Aorta (tissue), 5 donors: ENCODE measurements at regions of chr16 and their contacts with region 1.

Region 1: DNA sequence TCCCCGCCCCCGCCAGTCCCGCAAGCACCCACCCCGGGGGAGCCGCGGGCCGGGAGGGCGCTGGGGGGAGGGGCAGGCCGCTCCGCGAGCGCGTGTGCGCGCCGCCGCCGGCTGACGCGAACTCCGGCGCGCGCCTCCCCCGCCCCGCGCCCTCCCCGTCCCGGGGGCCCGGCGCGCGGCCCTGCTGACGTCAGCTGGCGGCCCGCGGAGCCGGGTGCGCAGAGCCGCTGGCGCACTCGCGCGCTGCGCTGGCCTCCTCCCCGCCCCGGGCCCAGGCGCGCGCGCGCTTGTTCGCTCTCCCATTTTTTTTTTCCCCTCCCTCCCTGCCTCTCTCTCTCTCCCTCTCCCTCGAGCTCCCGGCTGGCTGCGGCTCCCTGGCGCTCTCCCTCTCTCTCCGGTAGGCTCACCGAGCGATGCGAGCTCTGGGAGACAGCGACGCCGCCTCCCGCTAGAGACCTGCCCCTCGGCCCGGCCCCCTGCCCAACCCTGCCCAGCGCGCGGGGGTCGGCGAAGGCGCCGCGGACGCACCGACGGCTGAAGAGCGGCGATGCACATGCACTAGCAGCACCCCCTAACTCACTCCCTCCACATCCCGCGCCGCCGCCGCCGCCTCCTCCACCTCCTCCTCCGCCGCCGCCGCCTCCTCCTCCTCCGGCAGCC is at the start of gene GNAO1:
- DNase-seq: peak; percentile 75 to 91
- ATAC-seq: peak; percentile 87
- H3K4me3 ChIP-seq: peak within 1 kb of the TSS; percentile 62 to 92
- H3K27ac ChIP-seq: peak within 1 kb of the TSS; percentile 69 to 96
- H3K4me1 ChIP-seq: no peaks in the 10 kb centered on the region
- H3K27me3 ChIP-seq: no peaks in the 10 kb centered on the region
- total RNA-seq, gene GNAO1: 6.9 to 16.2 TPM

Region 2: DNA sequence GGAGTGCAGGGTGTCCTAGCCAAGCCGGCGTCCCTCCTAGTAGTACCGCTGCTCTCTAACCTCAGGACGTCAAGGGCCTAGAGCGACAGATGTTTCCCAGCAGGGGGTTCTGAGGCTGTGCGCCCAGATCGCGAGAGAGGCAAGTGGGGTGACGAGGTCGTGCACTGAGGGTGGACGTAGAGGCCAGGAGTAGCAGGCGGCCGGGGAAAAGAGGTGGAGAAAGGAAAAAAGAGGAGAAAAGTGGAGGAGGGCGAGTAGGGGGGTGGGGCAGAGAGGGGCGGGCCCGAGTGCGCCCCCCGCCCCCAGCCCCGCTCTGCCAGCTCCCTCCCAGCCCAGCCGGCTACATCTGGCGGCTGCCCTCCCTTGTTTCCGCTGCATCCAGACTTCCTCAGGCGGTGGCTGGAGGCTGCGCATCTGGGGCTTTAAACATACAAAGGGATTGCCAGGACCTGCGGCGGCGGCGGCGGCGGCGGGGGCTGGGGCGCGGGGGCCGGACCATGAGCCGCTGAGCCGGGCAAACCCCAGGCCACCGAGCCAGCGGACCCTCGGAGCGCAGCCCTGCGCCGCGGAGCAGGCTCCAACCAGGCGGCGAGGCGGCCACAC is 712.4 kb before region 1 on chr16 and contains the start of gene MMP2:
- intact Hi-C with region 1: loop called in 1 of 2 experiments (anchors 10 kb)
- DNase-seq: peak; percentile 87 to 88
- ATAC-seq: peak; percentile 53
- H3K4me3 ChIP-seq: peak within 1 kb of the TSS; percentile 37 to 69
- H3K27ac ChIP-seq: peak within 1 kb of the TSS in 1 of 2 donors; percentile 70
- H3K4me1 ChIP-seq: no peaks in the 10 kb centered on the region
- H3K27me3 ChIP-seq: no peaks in the 10 kb centered on the region
- total RNA-seq, gene MMP2: 261 to 731 TPM

Region 3: GRCh38 chr16:55577887-55578286 is 613.4 kb before region 1 on chr16:
- intact Hi-C with region 1: no loop called
- DNase-seq: no peak
- ATAC-seq: no peak
- H3K4me3 ChIP-seq: no peak overlapping the region
- H3K27ac ChIP-seq: no peak overlapping the region
- H3K4me1 ChIP-seq: no peaks in the 10 kb centered on the region
- H3K27me3 ChIP-seq: no peaks in the 10 kb centered on the region

Region 4: GRCh38 chr16:55944377-55944802 is 246.9 kb before region 1 on chr16:
- intact Hi-C with region 1: loop called in 1 of 2 experiments (anchors 10 kb)
- DNase-seq: peak; percentile 79 to 80
- ATAC-seq: peak; percentile 94
- H3K4me3 ChIP-seq: no peak overlapping the region
- H3K27ac ChIP-seq: no peak overlapping the region
- H3K4me1 ChIP-seq: no peaks in the 10 kb centered on the region
- H3K27me3 ChIP-seq: no peaks in the 10 kb centered on the region

Region 5: GRCh38 chr16:56151621-56152020 is 39.7 kb before region 1 on chr16:
- intact Hi-C with region 1: no loop called
- DNase-seq: no peak
- ATAC-seq: no peak
- H3K4me3 ChIP-seq: no peak overlapping the region
- H3K27ac ChIP-seq: no peak overlapping the region
- H3K4me1 ChIP-seq: no peaks in the 10 kb centered on the region
- H3K27me3 ChIP-seq: no peaks in the 10 kb centered on the region

Region 6: DNA sequence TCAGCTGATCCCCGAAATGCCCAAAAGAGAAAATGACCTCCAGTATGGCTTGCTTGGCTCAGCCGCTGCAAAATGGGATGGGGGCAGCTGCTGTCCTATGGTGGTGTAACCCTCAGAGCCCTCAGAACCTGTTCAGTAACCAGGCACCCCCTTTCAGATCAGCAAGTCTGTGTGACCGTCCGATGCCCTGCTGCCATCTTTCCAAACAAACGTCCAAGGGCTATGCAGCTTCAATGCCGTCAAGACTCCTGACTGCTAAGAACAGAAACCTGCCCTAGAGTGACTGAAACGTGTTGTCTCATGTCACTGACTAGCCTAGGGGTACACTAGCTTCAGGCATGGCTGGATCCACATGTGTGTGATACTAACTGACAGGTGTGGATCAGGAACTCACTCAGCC is 70.4 kb after region 1 on chr16:
- intact Hi-C with region 1: loop called in 1 of 2 experiments (anchors 2 kb)
- DNase-seq: no peak
- ATAC-seq: no peak
- H3K4me3 ChIP-seq: no peak overlapping the region
- H3K27ac ChIP-seq: no peak overlapping the region
- H3K4me1 ChIP-seq: peaks cover 6% of the 10 kb centered on the region in 2 donors
- H3K27me3 ChIP-seq: no peaks in the 10 kb centered on the region

Region 7: GRCh38 chr16:56317998-56318826 is 126.9 kb after region 1 on chr16:
- intact Hi-C with region 1: loop called in 1 of 2 experiments (anchors 5 kb)
- DNase-seq: peak; percentile 89 to 94
- ATAC-seq: peak; percentile 90
- H3K4me3 ChIP-seq: no peak overlapping the region
- H3K27ac ChIP-seq: no peak overlapping the region
- H3K4me1 ChIP-seq: no peaks in the 10 kb centered on the region
- H3K27me3 ChIP-seq: no peaks in the 10 kb centered on the region

Region 8: DNA sequence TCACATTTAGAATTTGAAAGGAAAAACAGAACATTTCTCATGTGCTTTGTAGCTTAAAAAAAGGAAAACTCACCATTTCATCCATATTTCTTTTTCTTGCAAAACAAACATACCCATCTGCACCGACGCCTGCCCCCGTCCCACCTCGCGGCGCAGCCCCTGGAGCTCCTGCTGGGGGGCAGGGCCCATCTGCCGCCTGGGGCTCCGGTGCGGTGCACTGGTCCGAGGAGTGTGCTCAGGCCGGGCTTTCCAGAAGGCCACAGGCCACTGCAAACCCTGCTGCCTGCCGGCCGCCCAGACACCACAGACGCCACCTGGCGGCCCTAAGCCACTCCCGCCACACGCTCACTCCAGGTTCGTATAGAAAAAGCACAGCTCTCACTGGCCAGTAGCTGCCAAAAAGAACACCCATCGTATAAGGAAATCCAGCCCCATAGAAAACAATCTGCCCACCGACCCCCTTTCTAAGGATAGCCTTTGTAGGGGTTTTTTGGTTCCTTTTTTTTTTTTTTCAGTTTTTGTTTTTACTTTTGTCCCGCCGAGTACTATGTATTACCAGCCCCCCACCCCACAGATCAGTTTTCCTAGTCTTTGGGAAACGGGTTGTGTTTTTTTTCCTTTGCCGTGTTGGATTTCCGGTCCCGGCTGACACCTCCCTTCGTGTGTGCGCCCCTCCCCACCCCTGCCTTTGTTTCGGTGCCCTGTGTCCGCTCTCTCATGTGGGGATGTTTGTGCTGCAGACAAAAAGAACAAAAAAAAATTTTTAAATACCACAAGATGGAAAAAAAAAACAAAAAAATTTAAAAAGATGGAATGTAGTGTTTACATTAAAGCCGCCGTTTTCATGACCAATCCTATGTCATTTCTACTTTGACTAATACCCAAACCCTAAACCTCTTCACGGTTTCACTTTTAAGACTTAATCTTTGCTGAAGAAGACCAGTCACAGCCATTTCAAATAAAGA is 165.3 kb after region 1 on chr16:
- intact Hi-C with region 1: loop called in 1 of 2 experiments (anchors 5 kb)
- DNase-seq: peak; percentile 87 to 93
- ATAC-seq: peak; percentile 93
- H3K4me3 ChIP-seq: peak overlapping the region; percentile 43 to 54
- H3K27ac ChIP-seq: no peak overlapping the region
- H3K4me1 ChIP-seq: no peaks in the 10 kb centered on the region
- H3K27me3 ChIP-seq: no peaks in the 10 kb centered on the region

Region 9: DNA sequence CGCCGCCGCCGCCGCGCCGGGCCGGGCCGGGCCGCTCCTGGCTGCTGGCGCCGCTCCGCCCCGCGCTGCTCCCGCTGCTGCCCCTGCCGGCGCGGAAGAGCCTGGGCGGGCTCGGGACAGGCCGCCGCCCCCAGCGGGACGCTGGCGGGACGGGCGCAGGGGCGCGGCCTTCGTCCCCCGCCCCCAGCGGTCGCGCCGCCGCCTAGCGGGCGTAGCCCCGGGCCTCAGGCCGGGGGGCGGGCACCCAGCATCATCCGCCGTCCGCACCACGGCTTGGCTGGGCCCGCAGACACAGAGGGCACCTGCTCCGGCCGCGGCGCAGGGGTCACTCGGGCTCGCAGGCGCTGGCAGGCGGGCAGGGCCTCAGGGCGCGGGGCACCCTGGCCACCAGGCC is 234.2 kb after region 1 on chr16 and contains the start of gene AMFR:
- intact Hi-C with region 1: loop called in 1 of 2 experiments (anchors 10 kb)
- DNase-seq: peak; percentile 76 to 89
- ATAC-seq: peak; percentile 95
- H3K4me3 ChIP-seq: peak within 1 kb of the TSS; percentile 98 to 100
- H3K27ac ChIP-seq: peak within 1 kb of the TSS; percentile 94 to 98
- H3K4me1 ChIP-seq: peaks cover 0 to 16% of the 10 kb centered on the region in 2 donors
- H3K27me3 ChIP-seq: no peaks in the 10 kb centered on the region
- total RNA-seq, gene AMFR: 112 to 124 TPM